Endothelial cell of umbilical vein (primary cell): ENCODE measurements at regions of chr3 and their contacts with region 1.

Region 1: DNA sequence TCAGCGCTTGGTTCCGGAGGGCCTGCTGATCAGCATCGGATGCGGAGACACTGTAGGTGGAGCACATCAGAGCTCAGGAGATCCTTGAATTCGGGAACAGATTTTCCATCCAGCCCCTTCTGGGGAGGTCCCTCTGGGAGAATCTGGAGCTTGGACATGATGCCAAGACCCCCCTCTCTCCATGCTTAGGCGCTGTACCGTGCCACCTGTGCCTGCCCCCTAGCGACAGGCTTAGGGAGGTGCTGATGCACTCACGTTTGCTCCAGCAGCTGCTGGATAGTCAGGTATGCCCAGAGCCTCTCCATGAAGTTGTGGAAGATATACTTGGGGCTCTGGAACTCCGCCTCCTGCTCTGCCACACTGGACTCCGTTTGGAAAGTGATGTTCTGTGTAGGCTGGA is 9.7 kb downstream of the ITIH4 start:
- DNase-seq: peak; percentile 13
- H3K4me3 ChIP-seq: no peak overlapping the region
- H3K27ac ChIP-seq: no peak overlapping the region
- H3K4me1 ChIP-seq: no peaks in the 10 kb centered on the region
- H3K27me3 ChIP-seq: no peaks in the 10 kb centered on the region
- CTCF ChIP-seq: peak; percentile 71 to 81
- POLR2A ChIP-seq: no peak

Region 2: GRCh38 chr3:52649461-52650210 is 171.1 kb before region 1 on chr3:
- CTCF ChIA-PET with region 1: no interaction called
- POLR2A ChIA-PET with region 1: no interaction called
- dilution Hi-C with region 1: no loop called
- intact Hi-C with region 1: no loop called
- DNase-seq: no peak
- H3K4me3 ChIP-seq: no peak overlapping the region
- H3K27ac ChIP-seq: no peak overlapping the region
- H3K4me1 ChIP-seq: no peaks in the 10 kb centered on the region
- H3K27me3 ChIP-seq: no peaks in the 10 kb centered on the region
- CTCF ChIP-seq: no peak
- POLR2A ChIP-seq: no peak

Region 3: DNA sequence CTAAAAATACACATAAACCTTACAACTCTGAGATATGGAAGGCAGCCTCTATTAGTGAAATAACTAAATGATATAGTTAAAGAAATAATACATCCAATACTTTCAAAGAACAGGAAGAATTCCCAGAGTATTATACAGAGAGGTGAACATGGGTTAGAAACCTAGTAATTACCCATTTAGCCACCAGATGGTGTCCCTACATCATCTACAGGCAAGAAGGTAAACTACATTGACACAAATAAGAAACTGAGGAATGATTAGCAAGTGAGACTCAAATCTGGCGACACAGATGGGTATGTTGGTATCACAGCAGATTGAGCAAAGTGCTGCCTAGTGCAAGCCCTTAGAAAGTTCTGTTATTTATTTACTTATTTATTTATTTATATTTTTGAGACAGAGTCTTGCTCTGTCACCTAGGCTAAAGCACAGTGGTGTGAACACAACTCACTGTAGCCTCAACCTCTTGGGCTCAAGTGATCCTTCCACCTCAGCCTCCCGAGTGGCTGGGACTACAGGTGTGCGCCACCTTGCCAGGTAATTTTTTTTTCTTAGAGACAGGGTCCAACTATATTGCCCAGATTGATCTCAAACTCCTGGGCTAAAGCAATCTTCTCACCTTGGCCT is 78.2 kb before region 1 on chr3:
- CTCF ChIA-PET with region 1: interaction called, 6 read pairs
- POLR2A ChIA-PET with region 1: no interaction called
- dilution Hi-C with region 1: no loop called
- intact Hi-C with region 1: loop called (anchors 1 kb)
- DNase-seq: peak; percentile 58
- H3K4me3 ChIP-seq: no peak overlapping the region
- H3K27ac ChIP-seq: no peak overlapping the region
- H3K4me1 ChIP-seq: no peaks in the 10 kb centered on the region
- H3K27me3 ChIP-seq: no peaks in the 10 kb centered on the region
- CTCF ChIP-seq: peak; percentile 36 to 47
- POLR2A ChIP-seq: no peak

Region 4: GRCh38 chr3:52770496-52771333 is 50.0 kb before region 1 on chr3 and contains the start of gene NEK4:
- CTCF ChIA-PET with region 1: interaction called, 11 read pairs
- POLR2A ChIA-PET with region 1: no interaction called
- dilution Hi-C with region 1: no loop called
- intact Hi-C with region 1: no loop called
- DNase-seq: peak; percentile 92
- H3K4me3 ChIP-seq: peak within 1 kb of the TSS; percentile 34 to 81 (median 73)
- H3K27ac ChIP-seq: peak within 1 kb of the TSS; percentile 54
- H3K4me1 ChIP-seq: peaks cover 12% of the 10 kb centered on the region
- H3K27me3 ChIP-seq: no peaks in the 10 kb centered on the region
- CTCF ChIP-seq: no peak
- POLR2A ChIP-seq: peak; percentile 98
- total RNA-seq, gene NEK4: 20.8 and 24.0 TPM in 2 replicates

Region 5: GRCh38 chr3:52798978-52799476 is 21.7 kb before region 1 on chr3:
- CTCF ChIA-PET with region 1: interaction called, 11 read pairs
- POLR2A ChIA-PET with region 1: no interaction called
- dilution Hi-C with region 1: no loop called
- intact Hi-C with region 1: no loop called
- DNase-seq: peak; percentile 18
- H3K4me3 ChIP-seq: no peak overlapping the region
- H3K27ac ChIP-seq: no peak overlapping the region
- H3K4me1 ChIP-seq: no peaks in the 10 kb centered on the region
- H3K27me3 ChIP-seq: no peaks in the 10 kb centered on the region
- CTCF ChIP-seq: peak; percentile 57 to 61
- POLR2A ChIP-seq: no peak

Region 6: DNA sequence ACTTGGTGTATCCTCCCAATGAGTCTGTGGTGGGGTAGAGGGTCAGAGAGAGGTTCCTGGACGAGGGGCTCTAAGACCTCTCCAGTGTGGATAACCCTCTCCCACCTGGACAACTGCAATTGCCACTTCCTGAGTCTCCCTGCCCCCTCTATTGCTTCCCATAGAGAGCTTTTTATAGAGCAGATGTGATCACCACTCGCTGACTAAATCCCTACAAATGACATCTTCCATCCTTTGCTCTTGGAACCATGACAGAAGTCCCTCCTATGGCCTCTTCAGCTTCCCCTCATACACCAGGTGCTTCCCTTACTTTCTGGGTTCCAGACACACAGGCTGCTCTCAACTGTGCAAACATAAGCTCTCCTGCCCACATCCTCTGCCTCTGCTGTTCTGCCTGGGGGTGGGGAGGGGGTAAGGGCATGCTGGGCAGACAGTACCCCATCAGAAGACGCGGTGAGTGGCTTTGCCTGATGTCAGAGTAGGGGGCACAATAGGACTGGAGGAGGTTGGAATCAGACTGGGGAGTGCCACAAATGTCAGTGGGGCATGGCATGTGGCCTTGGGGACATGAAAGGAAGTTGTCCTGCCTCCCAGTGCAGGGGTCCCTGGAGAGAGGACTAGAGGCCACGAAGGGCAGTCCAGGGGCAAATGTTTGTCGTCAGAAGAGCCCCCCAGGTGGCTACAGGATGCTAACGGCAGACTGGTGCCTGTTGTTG is 10.9 kb before region 1 on chr3:
- CTCF ChIA-PET with region 1: interaction called, 17 read pairs
- POLR2A ChIA-PET with region 1: no interaction called
- dilution Hi-C with region 1: no loop called
- intact Hi-C with region 1: no loop called
- DNase-seq: no peak
- H3K4me3 ChIP-seq: no peak overlapping the region
- H3K27ac ChIP-seq: no peak overlapping the region
- H3K4me1 ChIP-seq: no peaks in the 10 kb centered on the region
- H3K27me3 ChIP-seq: no peaks in the 10 kb centered on the region
- CTCF ChIP-seq: no peak
- POLR2A ChIP-seq: no peak

Region 7: DNA sequence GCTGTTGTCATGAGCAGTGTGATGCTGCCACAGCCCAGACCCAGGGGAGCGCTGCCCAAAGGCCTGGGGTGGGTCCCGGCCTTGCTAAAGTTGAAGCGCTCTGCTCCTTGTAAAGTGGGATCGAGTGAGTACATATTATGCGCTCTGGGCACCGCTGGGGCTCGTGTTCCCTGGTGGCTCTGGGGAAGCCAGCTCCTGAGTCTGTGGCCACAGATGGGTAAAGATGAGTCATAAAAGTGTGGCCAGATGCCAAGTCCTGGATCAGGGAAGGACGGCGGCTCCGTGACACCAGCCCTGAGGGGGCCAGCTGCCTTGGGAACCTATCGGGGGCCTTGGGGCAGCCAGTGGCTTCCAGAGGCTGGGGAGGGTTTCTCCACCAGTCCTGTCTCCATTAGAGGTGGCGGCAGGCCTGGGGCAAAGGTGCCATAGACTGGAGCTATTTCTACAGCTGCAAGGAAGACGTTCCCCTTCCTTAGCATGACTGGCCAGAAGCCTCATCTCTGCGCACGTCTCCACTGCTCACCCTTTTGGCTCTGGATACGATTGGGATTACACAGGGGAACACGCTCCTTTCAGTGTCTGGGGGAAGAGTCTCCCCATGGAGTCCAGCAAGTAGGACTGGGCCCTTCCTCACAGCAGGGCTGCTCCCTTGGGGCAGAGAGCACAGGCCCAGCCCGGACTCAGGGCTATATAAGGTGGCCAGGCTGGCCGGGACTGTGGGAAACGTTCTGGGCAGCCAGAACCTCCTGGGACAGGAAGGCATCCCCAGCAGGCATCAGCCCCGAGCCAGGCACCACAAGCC is 11.0 kb after region 1 on chr3:
- CTCF ChIA-PET with region 1: interaction called, 12 read pairs
- POLR2A ChIA-PET with region 1: no interaction called
- dilution Hi-C with region 1: no loop called
- intact Hi-C with region 1: no loop called
- DNase-seq: peak; percentile 72
- H3K4me3 ChIP-seq: no peak overlapping the region
- H3K27ac ChIP-seq: no peak overlapping the region
- H3K4me1 ChIP-seq: peaks cover 6% of the 10 kb centered on the region
- H3K27me3 ChIP-seq: no peaks in the 10 kb centered on the region
- CTCF ChIP-seq: no peak
- POLR2A ChIP-seq: no peak

Region 8: DNA sequence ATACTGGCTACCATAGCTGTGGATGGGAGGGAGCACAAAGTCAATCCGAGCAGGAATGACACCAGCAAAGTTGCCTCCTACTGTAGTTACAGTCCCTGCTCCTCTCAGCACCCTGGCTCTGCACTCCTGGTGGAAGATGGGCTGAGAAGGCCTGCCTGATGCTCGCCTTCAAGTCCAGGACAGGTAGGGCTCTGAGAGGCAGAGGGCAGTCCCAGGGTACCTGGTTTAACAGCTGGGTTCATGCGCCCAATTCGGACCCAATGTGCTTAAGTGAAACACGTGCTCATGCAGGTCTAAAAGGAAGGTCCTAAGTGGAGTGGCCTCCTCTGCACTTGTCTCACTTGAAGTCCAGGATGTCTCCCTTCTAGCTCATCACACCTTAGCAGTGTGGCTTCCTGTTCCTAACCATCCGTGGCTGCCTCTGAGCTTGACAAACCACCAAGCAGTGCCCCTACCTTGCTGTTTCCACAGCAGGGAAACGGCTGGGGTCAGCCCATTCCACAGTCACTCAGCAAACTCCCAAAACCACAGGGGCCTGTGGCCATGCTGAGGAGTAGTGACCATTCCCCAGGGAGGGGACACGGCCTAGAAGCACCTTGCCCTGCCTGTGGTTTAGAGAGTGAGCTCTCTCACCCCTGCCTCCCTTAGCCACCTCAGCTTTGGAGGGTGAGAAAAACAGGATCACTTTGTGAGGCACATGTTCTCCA is 18.0 kb after region 1 on chr3:
- CTCF ChIA-PET with region 1: interaction called, 10 read pairs
- POLR2A ChIA-PET with region 1: no interaction called
- dilution Hi-C with region 1: no loop called
- intact Hi-C with region 1: no loop called
- DNase-seq: no peak
- H3K4me3 ChIP-seq: no peak overlapping the region
- H3K27ac ChIP-seq: no peak overlapping the region
- H3K4me1 ChIP-seq: no peaks in the 10 kb centered on the region
- H3K27me3 ChIP-seq: no peaks in the 10 kb centered on the region
- CTCF ChIP-seq: no peak
- POLR2A ChIP-seq: no peak